ENCODE measurements at regions of chr15 and their contacts with region 1.

Region 1: DNA sequence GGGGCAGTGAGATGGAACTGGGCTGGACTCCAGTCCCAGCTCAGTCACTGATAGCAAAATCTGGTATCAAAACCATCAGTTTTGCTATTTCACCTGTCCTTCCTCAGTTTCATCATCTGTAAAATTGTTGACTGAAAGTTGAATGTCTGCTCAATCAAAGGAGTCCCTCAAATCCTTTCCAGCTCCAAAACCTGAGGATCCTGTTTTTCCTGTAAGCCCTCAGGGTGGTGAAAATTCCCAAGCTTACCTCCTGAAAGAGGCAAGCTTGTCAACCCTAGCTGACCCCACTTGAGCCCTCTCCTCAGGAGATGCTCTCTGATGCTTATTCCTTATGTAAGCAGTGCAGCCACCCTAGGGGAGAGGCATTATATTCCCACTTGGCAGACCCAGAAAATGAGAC is 82.5 kb downstream of the HMG20A start:
- DNase-seq: no peak
- H3K4me3 ChIP-seq: no peak overlapping the region
- H3K4me3 Mint-ChIP-seq: no peak overlapping the region
- H3K27ac ChIP-seq: no peak overlapping the region
- H3K27ac Mint-ChIP-seq: no peak overlapping the region
- H3K4me1 ChIP-seq: no peaks in the 10 kb centered on the region
- H3K4me1 Mint-ChIP-seq: no peaks in the 10 kb centered on the region
- H3K27me3 ChIP-seq: no peaks in the 10 kb centered on the region
- H3K27me3 Mint-ChIP-seq: peaks cover 0 to 1% of the 10 kb centered on the region in 2 donors

Region 2: DNA sequence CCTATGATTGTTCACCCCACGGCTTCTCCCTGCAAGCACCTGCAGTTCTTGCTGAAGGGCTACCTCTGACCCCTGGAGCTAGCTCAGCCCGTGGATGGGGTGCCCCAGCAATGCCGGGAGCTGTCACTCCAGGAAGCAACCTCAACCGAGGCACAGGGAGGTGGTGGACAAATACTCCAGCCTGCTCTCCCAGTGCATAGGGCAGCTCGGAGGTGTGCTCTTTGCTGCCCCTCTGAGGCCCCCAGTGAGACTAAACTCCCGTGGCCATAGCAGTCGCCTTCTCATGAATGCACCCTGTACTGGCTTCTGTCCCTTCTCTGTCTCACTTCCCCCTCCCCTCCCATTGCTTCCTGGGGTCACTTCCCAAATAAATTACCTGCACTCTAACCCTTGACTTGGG is 81.0 kb after region 1 on chr15:
- CTCF ChIA-PET with region 1: no interaction called
- POLR2A ChIA-PET with region 1: no interaction called
- DNase-seq: no peak
- H3K4me3 ChIP-seq: no peak overlapping the region
- H3K4me3 Mint-ChIP-seq: no peak overlapping the region
- H3K27ac ChIP-seq: no peak overlapping the region
- H3K27ac Mint-ChIP-seq: peak overlapping the region in 1 of 8 donors; percentile 76
- H3K4me1 ChIP-seq: no peaks in the 10 kb centered on the region
- H3K4me1 Mint-ChIP-seq: no peaks in the 10 kb centered on the region
- H3K27me3 ChIP-seq: no peaks in the 10 kb centered on the region
- H3K27me3 Mint-ChIP-seq: peaks cover 3 to 18% of the 10 kb centered on the region in 2 donors

Region 3: DNA sequence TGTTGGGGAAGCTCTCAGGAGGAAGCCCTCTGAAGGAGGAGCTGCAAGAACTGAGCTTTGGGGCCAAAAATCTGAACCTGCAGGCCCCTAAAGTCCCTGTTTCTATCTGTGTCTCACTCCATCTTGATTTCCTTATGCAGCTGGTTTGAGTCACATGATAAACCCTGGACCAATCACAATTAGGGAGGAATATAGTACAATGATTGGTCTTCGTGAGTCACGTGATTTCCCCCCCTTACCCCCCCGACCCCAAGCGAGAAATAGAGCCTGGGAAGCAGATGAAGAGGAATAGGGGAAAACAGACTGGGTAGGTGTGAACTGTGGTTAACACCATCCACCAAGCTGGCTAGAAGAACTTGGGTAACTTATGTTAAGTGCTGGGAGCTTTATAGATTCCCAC is 849.9 kb after region 1 on chr15:
- CTCF ChIA-PET with region 1: no interaction called
- POLR2A ChIA-PET with region 1: interaction called, 11 read pairs
- DNase-seq: no peak
- H3K4me3 ChIP-seq: no peak overlapping the region
- H3K4me3 Mint-ChIP-seq: no peak overlapping the region
- H3K27ac ChIP-seq: no peak overlapping the region
- H3K27ac Mint-ChIP-seq: no peak overlapping the region
- H3K4me1 ChIP-seq: no peaks in the 10 kb centered on the region
- H3K4me1 Mint-ChIP-seq: peaks cover 0 to 7% (median 0%) of the 10 kb centered on the region in 3 donors
- H3K27me3 ChIP-seq: no peaks in the 10 kb centered on the region
- H3K27me3 Mint-ChIP-seq: peaks cover 2 to 14% of the 10 kb centered on the region in 2 donors

Measured in CD8-positive, alpha-beta memory T cell (primary cell).